GM12878 (cell line): ENCODE measurements at regions of chr1 and their contacts with region 1.

Region 1: GRCh38 chr1:244801246-244801645 is 34.2 kb upstream of the COX20 start:
- DNase-seq: no peak
- ATAC-seq: peak; percentile 96
- H3K4me3 ChIP-seq: no peak overlapping the region
- H3K27ac ChIP-seq: no peak overlapping the region
- H3K4me1 ChIP-seq: no peaks in the 10 kb centered on the region
- H3K27me3 ChIP-seq: no peaks in the 10 kb centered on the region; a peak in 1 of 4 replicates
- CTCF ChIP-seq: peak; percentile 62 to 71 (median 65); a peak in 5 of 6 replicates
- EP300 ChIP-seq: no peak
- POLR2A ChIP-seq: no peak
- RAD21 ChIP-seq: peak; percentile 88

Region 2: GRCh38 chr1:244473059-244473605 is 328.1 kb before region 1 on chr1:
- CTCF ChIA-PET with region 1: no interaction called
- POLR2A ChIA-PET with region 1: no interaction called
- RAD21 ChIA-PET with region 1: no interaction called
- SMC1A ChIA-PET with region 1: no interaction called
- in situ Hi-C with region 1: no loop called
- intact Hi-C with region 1: loop called (anchors 5 kb)
- DNase-seq: no peak
- ATAC-seq: no peak
- H3K4me3 ChIP-seq: no peak overlapping the region
- H3K27ac ChIP-seq: no peak overlapping the region
- H3K4me1 ChIP-seq: no peaks in the 10 kb centered on the region
- H3K27me3 ChIP-seq: no peaks in the 10 kb centered on the region
- CTCF ChIP-seq: no peak
- EP300 ChIP-seq: no peak
- POLR2A ChIP-seq: no peak
- RAD21 ChIP-seq: no peak

Region 3: DNA sequence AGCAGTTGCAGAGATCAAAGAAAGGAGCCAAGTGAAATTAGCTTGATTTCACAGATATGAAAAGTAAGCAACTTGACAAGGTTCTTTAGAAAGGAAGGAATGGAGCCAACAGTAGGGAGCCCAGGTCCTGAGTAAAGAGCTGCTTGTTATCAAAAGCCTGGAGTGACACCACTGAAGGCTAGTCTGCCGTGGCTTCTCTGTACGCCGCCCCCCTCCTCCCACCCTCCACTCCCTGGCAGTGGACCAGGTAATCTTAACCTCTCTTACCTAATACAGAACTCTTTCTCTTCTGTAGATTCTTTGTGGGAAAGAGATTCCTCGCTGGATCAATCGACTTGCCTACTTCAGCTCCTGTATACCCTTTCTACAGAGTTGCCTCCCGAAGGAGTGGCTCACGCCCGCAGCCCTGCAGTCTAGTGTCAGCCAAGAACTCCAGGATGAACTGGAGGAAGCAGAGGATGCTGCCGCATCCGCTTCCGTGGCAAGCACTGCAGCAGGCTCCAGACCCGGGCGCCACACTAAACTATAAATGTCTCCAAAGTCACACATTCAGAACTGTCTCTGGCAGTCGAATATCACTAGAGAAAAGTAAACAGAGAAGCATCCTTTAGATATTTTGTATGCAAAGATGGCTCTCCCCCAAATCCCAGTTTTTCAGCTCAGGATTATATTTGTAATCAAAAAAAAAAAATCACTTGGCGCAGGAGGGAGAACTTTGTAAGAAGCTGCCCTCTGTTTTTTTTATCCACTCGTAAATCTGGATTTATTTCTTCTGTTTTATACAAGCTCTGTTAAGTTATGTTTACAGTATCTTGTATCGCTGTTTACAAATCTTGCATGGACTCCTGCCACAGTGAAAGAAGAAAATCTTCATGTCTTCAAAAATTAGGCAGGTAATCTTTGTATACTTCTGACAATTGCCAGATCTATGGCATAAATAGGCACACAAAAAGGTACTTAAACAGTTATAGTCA is 95.7 kb before region 1 on chr1:
- CTCF ChIA-PET with region 1: no interaction called
- POLR2A ChIA-PET with region 1: no interaction called
- RAD21 ChIA-PET with region 1: no interaction called
- SMC1A ChIA-PET with region 1: no interaction called
- in situ Hi-C with region 1: no loop called
- intact Hi-C with region 1: no loop called
- DNase-seq: no peak
- ATAC-seq: no peak
- H3K4me3 ChIP-seq: no peak overlapping the region
- H3K27ac ChIP-seq: no peak overlapping the region
- H3K4me1 ChIP-seq: no peaks in the 10 kb centered on the region
- H3K27me3 ChIP-seq: no peaks in the 10 kb centered on the region
- CTCF ChIP-seq: no peak
- EP300 ChIP-seq: no peak
- POLR2A ChIP-seq: no peak
- RAD21 ChIP-seq: no peak

Region 4: GRCh38 chr1:244730153-244730933 is 70.9 kb before region 1 on chr1:
- CTCF ChIA-PET with region 1: no interaction called
- POLR2A ChIA-PET with region 1: no interaction called
- RAD21 ChIA-PET with region 1: no interaction called
- SMC1A ChIA-PET with region 1: no interaction called
- in situ Hi-C with region 1: no loop called
- intact Hi-C with region 1: no loop called
- DNase-seq: no peak
- ATAC-seq: peak; percentile 53
- H3K4me3 ChIP-seq: peak overlapping the region; percentile 65; the same call in 1 of the 2 replicates
- H3K27ac ChIP-seq: no peak overlapping the region
- H3K4me1 ChIP-seq: no peaks in the 10 kb centered on the region
- H3K27me3 ChIP-seq: peaks cover 4 to 6% of the 10 kb centered on the region in 2 experiments
- CTCF ChIP-seq: no peak
- EP300 ChIP-seq: no peak
- POLR2A ChIP-seq: no peak
- RAD21 ChIP-seq: no peak

Region 5: GRCh38 chr1:244779410-244779809 is 21.8 kb before region 1 on chr1:
- CTCF ChIA-PET with region 1: interaction called, 12 read pairs
- POLR2A ChIA-PET with region 1: no interaction called
- RAD21 ChIA-PET with region 1: interaction called, 3 read pairs
- SMC1A ChIA-PET with region 1: no interaction called
- in situ Hi-C with region 1: no loop called
- intact Hi-C with region 1: no loop called
- DNase-seq: no peak
- ATAC-seq: no peak
- H3K4me3 ChIP-seq: no peak overlapping the region
- H3K27ac ChIP-seq: no peak overlapping the region
- H3K4me1 ChIP-seq: no peaks in the 10 kb centered on the region
- H3K27me3 ChIP-seq: peaks cover 0 to 1% of the 10 kb centered on the region in 2 experiments; a peak in 2 of 4 replicates
- CTCF ChIP-seq: no peak
- EP300 ChIP-seq: no peak
- POLR2A ChIP-seq: no peak
- RAD21 ChIP-seq: no peak

Region 6: DNA sequence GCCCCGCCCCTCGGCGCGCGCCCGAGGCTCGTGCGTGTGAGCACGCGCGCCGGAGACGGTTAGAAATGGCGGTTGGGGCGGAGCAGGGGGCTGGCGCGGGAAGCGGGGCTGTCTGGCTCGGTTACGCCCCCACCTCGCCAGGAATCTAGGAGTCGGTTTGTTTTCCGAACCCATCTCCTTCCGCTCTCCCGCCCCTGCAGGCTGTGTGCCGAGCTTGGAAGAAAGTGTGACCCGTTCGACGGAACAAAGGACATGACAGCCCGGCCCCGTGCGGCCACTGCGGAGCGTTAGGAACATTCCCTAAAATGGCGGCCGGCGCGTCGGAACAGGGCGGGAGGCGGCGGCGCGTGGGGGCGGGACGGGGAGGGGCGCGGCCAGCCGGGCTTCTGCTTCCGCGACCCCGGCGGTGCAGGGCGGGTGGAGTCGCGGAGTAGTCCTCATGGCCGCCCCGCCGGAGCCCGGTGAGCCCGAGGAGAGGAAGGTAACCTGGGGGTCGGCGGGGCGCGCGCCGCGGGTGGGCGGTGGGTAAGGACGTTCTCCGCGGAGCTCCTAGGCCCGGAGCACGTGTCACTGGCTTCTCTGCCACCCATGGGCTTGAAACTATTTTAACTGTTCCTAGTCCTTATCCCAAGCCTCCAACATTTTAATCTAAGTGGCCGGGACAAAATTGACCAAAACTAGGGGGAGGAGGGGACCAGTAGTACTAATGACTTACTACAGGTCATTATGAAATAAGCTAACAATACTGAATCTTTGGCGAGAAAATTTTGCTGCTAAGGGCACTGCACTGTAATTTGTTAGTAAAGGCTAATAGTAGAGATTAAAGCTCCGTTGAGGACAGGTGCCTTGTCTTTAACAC is 34.3 kb after region 1 on chr1 and contains the start of gene COX20:
- CTCF ChIA-PET with region 1: interaction called, 25 read pairs
- POLR2A ChIA-PET with region 1: interaction called, 4 read pairs
- RAD21 ChIA-PET with region 1: interaction called, 11 read pairs
- SMC1A ChIA-PET with region 1: interaction called, 19 read pairs
- in situ Hi-C with region 1: no loop called
- intact Hi-C with region 1: loop called (anchors 1 kb)
- DNase-seq: peak; percentile 60
- ATAC-seq: peak; percentile 74
- H3K4me3 ChIP-seq: peak within 1 kb of the TSS; percentile 72
- H3K27ac ChIP-seq: peak within 1 kb of the TSS; percentile 99
- H3K4me1 ChIP-seq: peaks cover 6% of the 10 kb centered on the region
- H3K27me3 ChIP-seq: no peaks in the 10 kb centered on the region
- CTCF ChIP-seq: no peak
- EP300 ChIP-seq: 0 out of 4 replicates have a peak, but pooled peaks of 1 of the 2 experiments have one; percentile 3
- POLR2A ChIP-seq: peak; percentile 91
- RAD21 ChIP-seq: no peak
- polyA plus RNA-seq, gene COX20: 91.9 to 95.3 TPM

Region 7: GRCh38 chr1:244864253-244865027 is 63.2 kb after region 1 on chr1 and contains the start of gene HNRNPU:
- CTCF ChIA-PET with region 1: interaction called, 14 read pairs
- POLR2A ChIA-PET with region 1: no interaction called
- RAD21 ChIA-PET with region 1: interaction called, 6 read pairs
- SMC1A ChIA-PET with region 1: interaction called, 19 read pairs
- in situ Hi-C with region 1: no loop called
- intact Hi-C with region 1: no loop called
- DNase-seq: peak; percentile 81
- ATAC-seq: peak; percentile 80
- H3K4me3 ChIP-seq: peak within 1 kb of the TSS; percentile 100
- H3K27ac ChIP-seq: peak within 1 kb of the TSS; percentile 99
- H3K4me1 ChIP-seq: peaks cover 3% of the 10 kb centered on the region; the same call in 1 of the 2 replicates
- H3K27me3 ChIP-seq: no peaks in the 10 kb centered on the region
- CTCF ChIP-seq: peak; percentile 9 to 30 (median 16); a peak in 3 of 6 replicates
- EP300 ChIP-seq: no peak
- POLR2A ChIP-seq: peak; percentile 99
- RAD21 ChIP-seq: no peak
- polyA plus RNA-seq, gene HNRNPU: 163 to 201 TPM

Region 8: DNA sequence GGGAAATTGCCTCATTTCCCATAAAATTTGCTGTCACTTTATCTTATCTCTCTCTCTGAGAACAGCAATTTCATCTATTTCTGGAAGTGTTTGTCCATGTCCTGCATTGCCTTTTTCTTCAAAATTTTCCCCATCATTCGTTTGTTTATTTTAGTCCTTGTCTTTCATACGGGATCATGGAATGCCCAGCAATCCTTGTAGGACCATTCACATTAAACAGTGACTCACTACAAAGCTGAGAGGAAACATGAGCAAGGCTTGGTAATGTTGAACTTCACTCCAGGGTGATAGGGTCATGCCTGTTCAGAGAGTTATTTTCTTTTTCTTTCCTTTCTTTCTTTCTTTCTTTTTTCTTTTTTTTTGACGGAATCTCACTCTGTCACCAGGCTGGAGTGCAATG is 95.3 kb after region 1 on chr1:
- CTCF ChIA-PET with region 1: no interaction called
- POLR2A ChIA-PET with region 1: no interaction called
- RAD21 ChIA-PET with region 1: no interaction called
- SMC1A ChIA-PET with region 1: no interaction called
- in situ Hi-C with region 1: no loop called
- intact Hi-C with region 1: no loop called
- DNase-seq: no peak
- ATAC-seq: no peak
- H3K4me3 ChIP-seq: no peak overlapping the region
- H3K27ac ChIP-seq: no peak overlapping the region
- H3K4me1 ChIP-seq: no peaks in the 10 kb centered on the region
- H3K27me3 ChIP-seq: no peaks in the 10 kb centered on the region
- CTCF ChIP-seq: no peak
- EP300 ChIP-seq: no peak
- POLR2A ChIP-seq: no peak
- RAD21 ChIP-seq: no peak

Region 9: DNA sequence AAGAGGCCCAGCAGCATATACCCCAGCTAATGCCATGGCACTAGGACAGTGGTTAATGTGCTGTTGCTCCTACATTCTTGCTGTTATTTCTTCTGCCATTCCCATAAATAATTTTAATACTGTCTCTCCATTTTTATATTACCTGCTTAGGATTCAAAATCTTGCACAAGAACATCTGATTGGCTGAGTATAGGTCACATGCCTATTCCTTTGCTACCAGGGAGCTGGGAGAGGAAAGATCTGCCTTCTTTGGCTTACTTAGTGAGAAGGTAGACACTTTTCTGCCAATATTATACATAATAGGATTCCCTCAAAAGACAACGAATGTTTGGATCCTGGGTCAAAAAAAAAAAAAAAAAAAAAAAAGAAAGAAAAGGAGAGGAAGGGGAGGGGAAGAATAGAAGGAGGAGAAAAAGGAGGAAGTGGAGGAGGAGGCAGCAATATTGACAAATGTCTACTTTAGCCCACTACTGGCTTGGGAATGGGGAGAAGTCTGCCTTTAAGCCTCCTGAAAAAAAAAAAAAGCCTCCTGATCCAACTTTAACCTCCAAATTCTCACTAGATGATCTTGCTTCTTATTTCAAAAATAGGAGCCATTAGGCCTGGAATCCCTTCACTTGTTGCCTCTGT is 197.6 kb after region 1 on chr1:
- CTCF ChIA-PET with region 1: interaction called, 10 read pairs
- POLR2A ChIA-PET with region 1: no interaction called
- RAD21 ChIA-PET with region 1: no interaction called
- SMC1A ChIA-PET with region 1: interaction called, 3 read pairs
- in situ Hi-C with region 1: no loop called
- intact Hi-C with region 1: no loop called
- DNase-seq: no peak
- ATAC-seq: no peak
- H3K4me3 ChIP-seq: no peak overlapping the region
- H3K27ac ChIP-seq: no peak overlapping the region
- H3K4me1 ChIP-seq: no peaks in the 10 kb centered on the region
- H3K27me3 ChIP-seq: no peaks in the 10 kb centered on the region
- CTCF ChIP-seq: no peak
- EP300 ChIP-seq: no peak
- POLR2A ChIP-seq: no peak
- RAD21 ChIP-seq: no peak